ENCODE measurements at regions of chr10 and their contacts with region 1.

Region 1: DNA sequence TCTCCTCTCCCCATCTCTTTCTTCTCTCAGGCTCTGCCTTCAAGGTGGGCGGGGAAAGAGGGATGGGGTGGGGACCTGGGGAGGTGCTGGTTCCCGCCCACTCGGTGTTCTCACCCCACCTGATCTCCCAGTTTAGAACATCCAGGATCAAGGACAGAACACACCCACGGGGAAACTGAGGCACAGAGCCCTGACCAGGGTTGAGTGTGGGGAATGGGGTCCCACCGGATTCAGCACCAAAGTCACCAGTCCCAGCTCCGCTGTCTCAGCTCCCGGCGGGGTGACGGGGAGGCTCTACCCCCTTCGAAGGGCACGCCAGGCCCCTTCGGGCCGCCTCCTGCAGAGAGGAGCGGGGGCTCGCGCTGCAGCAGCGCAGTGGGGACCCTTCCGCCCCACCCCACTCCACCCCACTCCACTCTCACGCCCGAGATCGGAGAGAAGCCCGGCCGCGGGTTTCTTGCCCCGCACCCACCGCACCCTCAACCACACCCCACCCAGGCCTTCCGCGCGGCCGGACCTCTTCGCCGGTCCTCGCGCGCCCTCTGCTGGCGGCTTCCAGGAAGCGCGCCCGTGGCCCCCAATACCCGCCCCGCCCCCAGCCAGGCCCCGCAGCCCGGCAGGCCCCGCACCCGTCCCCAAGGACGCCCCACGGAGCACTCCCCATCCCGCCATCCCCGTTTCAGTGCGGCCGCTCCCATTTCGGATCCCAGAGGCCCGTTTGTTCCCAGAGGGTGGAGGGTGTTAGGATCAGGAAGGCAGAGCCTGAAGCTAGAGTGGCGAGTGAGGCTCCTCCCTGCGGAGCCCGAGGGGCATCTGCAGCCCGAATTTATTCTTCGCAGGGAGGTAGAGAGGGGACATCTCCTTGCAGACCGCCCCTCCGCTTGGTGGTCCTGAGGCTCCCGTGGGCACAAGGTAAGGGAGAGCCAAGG is 18.0 kb downstream of the POLL start:
- DNase-seq: peak; percentile 91
- ATAC-seq: peak; percentile 91

Region 2: GRCh38 chr10:101161494-101162299 is 408.4 kb before region 1 on chr10:
- intact Hi-C with region 1: loop called (anchors 2 kb)
- DNase-seq: peak; percentile 82
- ATAC-seq: peak; percentile 63

Region 3: DNA sequence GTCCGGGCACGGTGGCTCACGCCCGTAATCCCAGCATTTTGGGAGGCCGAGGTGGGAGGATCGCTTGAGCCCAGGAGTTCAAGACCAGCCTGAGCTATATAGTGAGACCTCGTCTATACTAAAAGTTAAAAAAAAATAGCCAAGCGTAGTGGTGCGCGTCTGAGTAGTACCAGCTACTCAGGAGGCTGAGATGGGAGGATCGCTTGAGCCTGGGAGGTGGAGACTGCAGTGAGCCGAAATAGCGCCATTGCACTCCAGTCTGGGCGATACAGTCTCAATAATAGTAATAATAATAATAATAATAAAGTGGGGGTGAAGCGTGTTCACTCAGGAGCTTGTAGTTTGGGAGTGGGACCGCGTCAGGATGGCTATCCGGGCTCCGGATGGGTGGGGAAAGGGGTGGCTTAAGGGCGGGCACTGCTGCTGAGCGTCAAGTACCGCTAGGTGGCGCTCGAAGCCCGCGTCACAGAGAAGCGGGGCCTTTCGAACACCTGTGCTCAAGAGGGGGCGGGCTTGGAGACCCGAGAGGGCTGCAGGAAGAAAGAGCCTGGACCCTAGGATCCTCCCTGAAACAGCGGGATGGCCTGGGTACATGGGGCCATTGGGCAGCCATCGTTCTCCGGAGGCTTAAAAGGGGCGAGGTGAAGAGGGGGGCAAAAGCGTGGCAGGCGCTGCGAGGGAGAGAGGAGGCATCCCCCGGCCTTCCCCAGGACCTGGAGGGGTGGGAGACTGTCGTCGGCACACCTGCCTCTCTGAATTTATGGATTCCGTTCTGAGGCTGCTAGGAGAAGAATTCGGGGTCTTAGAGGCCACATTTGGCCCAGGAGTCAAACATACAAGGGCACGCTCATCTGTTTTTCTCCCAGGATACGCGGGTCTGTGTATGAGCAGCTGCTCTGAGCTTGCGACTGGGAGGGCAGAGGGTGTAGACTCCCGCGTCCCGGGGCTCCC is 355.4 kb before region 1 on chr10:
- intact Hi-C with region 1: loop called (anchors 1 kb)
- DNase-seq: no peak
- ATAC-seq: peak; percentile 77

Region 4: DNA sequence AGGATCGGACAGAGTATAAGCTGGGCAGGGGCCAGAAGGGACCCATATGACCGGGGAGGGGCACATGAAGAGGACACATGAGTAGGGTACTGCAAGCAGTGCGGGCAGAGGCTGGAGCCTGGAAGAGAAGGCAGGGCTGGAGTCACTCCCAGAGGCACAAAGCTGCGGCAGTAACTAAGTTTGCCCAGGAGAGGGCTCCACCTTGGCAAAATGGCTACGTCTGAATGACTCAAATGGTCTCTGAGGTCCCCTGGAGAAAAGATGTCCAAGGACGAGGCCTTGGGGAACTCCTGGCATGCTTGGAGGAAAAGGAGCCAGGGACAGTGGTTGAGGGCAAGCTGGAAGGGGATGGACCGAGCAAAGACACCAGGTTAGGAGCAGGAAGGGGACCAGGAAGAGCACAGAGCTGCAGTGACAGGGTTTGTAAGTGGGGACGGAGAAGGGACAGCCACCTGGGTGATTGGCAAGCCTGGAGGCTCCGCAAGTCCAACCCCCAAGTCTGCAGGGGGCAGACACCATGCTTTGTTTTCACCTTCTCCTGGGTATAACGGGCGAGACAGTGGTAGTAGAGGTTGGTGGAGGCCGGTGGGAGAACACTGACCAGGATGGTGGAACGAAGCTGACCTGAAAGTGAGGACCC is 297.8 kb before region 1 on chr10:
- intact Hi-C with region 1: loop called (anchors 5 kb)
- DNase-seq: peak; percentile 69
- ATAC-seq: peak; percentile 69

Region 5: GRCh38 chr10:101297901-101298486 is 272.1 kb before region 1 on chr10:
- intact Hi-C with region 1: loop called (anchors 10 kb)
- DNase-seq: no peak
- ATAC-seq: no peak

Region 6: DNA sequence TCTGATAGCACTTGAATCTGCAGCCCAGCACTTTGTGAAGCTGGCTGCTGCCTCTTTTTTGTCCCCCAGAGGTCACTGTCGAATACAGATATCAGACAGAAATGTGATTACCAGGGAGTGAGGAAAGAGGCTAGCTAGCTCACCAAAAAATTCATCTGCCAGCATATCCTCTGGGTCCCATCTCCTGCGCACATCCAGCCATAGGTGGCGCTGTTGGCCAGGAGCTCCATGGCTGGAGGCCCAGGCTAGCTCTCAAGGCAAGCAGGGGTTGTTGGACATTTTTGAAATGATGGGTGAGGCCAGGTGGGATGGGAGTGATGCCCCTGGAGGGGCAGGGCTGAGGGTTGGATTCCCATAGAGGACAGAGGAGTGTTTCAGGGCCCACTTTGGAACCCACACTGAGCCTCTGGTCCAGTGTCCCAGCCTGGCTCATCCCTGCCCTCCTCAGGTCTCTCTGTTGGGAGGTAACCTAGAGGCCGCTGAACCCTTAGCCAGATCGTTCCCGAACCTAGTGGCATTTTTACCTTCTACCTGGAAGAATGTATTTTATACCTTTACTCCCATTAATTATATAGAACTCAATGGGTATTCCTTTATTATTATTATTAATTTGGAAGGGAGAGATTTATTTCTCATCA is 32.8 kb after region 1 on chr10:
- intact Hi-C with region 1: no loop called
- DNase-seq: peak; percentile 82
- ATAC-seq: peak; percentile 80

Measured in Right ventricle myocardium inferior (tissue), 1 donor.